ENCODE measurements at regions of chr5 and their contacts with region 1.

Region 1: GRCh38 chr5:119315516-119315949 is 40.3 kb upstream of the TNFAIP8 start:
- DNase-seq: no peak
- ATAC-seq: peak; percentile 88

Region 2: DNA sequence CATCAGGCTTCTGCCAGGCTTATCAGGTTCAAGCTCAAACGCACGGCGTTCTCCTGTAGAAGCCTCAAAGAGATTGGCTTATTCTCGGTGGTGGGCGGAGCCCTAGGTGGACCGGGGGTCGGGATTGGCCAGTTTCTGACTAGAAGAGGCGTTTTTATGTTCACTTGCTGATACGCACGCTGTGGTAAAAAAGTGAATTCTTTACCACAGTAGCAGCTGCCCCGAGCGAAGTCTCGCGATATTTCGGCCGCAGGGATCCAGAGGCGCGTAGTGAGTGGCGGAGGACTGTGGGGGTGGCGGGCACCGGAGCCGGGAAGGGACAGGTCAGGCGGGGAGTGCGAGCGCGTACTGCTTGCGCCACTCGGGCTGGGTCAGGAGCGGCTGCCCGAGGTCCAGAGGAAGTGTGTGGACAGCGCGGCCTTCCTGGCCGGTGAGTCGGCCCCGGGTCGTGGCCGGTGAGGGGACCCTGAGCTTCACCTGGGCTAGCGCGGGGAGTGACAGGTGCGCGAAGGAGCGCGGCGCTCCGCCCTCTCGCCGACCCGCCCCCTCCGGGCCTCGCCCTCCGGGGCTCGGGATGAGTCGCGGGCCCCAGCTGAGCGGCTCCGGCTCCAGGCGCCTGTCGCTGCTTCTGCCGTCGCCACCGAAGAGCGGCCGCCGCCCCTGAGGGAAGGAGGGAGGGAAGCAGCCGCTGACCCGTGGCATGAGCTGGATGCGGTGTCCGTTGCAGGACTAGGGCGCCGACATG is 244.5 kb before region 1 on chr5 and contains the start of gene DMXL1:
- intact Hi-C with region 1: no loop called
- DNase-seq: peak; percentile 100
- ATAC-seq: peak; percentile 98
- total RNA-seq, gene DMXL1: 23.3 TPM

Region 3: GRCh38 chr5:119179857-119180641 is 135.5 kb before region 1 on chr5:
- intact Hi-C with region 1: no loop called
- DNase-seq: no peak
- ATAC-seq: no peak

Region 4: DNA sequence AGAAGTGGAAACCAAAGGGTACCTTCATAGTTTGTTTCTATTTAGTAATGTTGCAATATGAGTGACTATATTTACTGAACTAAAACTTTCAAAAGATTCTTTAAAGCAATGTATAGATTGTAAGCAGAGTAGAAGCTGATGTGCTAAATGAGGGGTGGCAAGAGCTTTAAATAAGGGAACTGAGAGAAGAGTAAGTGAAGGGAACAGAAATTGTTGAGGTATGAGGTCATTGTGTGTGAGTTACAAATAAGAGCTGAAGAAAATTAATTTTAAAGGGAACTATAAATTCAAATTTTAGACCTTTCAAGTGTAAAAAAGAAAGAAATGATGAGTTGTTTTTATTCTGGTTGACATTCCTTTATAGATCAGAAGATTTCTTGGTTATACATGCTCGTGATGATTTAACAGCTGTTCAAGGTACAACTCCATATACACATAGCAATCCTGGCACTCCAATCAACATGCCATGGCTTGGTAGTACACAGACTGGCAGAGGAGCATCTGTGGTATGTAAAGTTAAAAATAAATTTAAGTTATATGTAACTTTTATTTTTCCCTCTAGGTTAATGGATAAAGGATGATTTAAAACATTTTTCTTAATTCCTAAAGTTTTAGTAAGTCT is 94.8 kb before region 1 on chr5:
- intact Hi-C with region 1: no loop called
- DNase-seq: no peak
- ATAC-seq: no peak

Region 5: GRCh38 chr5:119411935-119412602 is 96.5 kb after region 1 on chr5:
- intact Hi-C with region 1: loop called (anchors 5 kb)
- DNase-seq: peak; percentile 67
- ATAC-seq: peak; percentile 98

Region 6: DNA sequence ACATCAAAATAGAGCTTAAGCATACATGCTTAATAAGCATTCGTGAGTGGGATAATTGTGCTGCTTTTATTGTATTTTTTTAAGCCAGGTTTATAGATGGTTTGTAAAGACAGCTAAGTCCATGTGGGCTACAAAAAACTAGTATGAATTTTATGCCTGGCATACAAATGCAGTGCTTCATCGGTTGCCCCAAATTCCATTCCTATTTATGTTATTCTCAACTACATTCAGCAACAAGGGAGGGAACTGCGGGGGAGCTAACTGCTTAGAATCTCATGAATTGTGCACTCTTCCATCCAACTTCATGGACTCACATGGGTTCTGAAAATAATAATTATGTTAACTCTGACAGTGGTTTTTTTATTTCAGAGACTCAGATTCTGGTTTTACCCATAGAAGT is 513.0 kb after region 1 on chr5:
- intact Hi-C with region 1: no loop called
- DNase-seq: no peak
- ATAC-seq: no peak